ENCODE measurements at regions of chr3 and their contacts with region 1.

Region 1: GRCh38 chr3:122793568-122794416 is at the start of gene HSPBAP1:
- DNase-seq: peak; percentile 96
- H3K4me3 ChIP-seq: peak within 1 kb of the TSS; percentile 31 to 80 (median 65)
- H3K27ac ChIP-seq: peak within 1 kb of the TSS; percentile 92
- H3K4me1 ChIP-seq: peaks cover 21% of the 10 kb centered on the region
- H3K27me3 ChIP-seq: no peaks in the 10 kb centered on the region
- CTCF ChIP-seq: no peak
- POLR2A ChIP-seq: peak; percentile 68
- total RNA-seq, gene HSPBAP1: 9.2 and 10.6 TPM in 2 replicates

Region 2: DNA sequence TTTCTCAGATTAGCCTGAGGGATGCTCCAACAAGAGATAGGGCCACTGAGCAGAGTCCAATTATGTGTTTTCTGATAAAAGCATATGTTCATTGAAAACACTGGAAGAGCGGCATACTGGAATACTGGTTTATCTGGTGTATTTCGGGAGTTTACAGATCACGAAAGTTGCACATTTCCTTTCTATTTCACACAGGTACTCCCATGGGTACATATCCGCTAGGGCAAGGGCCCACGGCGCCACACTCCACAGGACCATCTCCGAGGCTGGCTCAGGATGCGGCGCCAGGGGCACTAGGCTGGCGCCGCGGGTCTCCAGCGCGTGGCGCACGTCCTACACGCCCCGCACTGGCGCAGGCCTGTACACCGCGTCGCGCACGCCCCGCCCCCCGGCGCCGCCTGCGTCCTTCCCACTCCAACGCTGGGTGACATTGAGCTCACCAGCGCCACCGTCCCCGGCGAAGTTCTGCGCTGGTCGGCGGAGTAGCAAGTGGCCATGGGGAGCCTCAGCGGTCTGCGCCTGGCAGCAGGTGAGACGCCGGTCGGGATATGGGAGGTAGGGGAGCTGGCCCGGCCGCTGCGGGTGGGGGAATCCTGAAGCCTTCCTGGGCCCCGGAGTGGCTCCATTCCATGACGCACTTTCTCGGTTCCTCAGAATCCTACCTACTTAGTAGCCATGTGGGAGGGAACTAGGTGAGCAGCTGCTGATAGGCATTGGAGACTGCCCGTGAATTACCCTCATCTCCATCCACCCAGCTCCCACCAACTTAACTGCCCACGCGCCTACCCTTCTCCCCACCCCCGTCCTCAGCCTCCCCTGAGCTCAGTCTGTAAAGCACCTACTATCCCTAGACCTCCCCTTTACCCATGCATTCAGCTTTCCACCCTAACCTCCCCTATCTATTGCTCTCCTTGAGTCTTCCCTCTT is 409.8 kb before region 1 on chr3 and contains the start of gene FAM162A:
- CTCF ChIA-PET with region 1: no interaction called
- POLR2A ChIA-PET with region 1: no interaction called
- dilution Hi-C with region 1: no loop called
- intact Hi-C with region 1: loop called (anchors 5 kb)
- DNase-seq: peak; percentile 96
- H3K4me3 ChIP-seq: peak within 1 kb of the TSS; percentile 69 to 97 (median 77)
- H3K27ac ChIP-seq: peak within 1 kb of the TSS; percentile 58
- H3K4me1 ChIP-seq: peaks cover 16% of the 10 kb centered on the region
- H3K27me3 ChIP-seq: no peaks in the 10 kb centered on the region
- CTCF ChIP-seq: peak; percentile 53 to 69
- POLR2A ChIP-seq: peak; percentile 86
- total RNA-seq, gene FAM162A: 23.4 and 25.9 TPM in 2 replicates

Region 3: GRCh38 chr3:122514123-122515019 is 279.4 kb before region 1 on chr3 and contains the start of gene KPNA1:
- CTCF ChIA-PET with region 1: no interaction called
- POLR2A ChIA-PET with region 1: no interaction called
- dilution Hi-C with region 1: no loop called
- intact Hi-C with region 1: loop called (anchors 1 kb)
- DNase-seq: peak; percentile 92
- H3K4me3 ChIP-seq: peak within 1 kb of the TSS; percentile 55 to 96 (median 91)
- H3K27ac ChIP-seq: peak within 1 kb of the TSS; percentile 72
- H3K4me1 ChIP-seq: peaks cover 14% of the 10 kb centered on the region
- H3K27me3 ChIP-seq: peaks cover 1 to 8% of the 10 kb centered on the region in 2 experiments
- CTCF ChIP-seq: no peak
- POLR2A ChIP-seq: peak; percentile 94
- total RNA-seq, gene KPNA1: 110 and 113 TPM in 2 replicates

Region 4: DNA sequence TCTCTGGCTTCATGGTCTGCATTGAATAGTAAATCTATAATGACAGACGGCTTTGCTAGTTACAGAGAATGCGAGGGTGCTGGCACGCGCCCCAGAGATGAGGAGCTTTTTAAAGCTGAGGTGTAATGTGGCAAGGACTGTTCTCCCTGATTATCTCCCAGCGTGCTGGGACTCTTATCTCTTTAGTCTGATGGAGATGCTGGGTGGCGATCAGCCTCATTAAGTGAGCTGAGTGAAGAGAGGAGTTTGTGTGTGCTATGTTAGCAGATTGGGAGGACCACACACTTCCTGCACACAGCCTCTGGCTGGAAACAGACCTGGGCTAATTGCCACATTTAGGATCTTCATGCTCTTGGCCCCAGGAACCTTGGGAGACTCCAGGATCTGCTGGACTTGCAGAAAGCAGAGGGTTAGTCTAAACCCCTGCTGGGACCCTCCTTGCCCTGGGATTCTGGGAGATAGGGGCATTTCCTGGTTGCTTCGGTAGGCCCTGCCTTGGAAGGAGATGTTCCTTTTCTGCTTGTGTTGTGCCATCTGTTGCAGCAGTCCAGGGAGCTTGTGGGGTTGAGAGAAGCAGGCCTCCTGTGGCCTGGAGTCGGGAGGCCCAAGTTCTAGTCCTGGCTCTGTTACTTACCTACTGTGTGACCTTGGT is 288.1 kb after region 1 on chr3:
- CTCF ChIA-PET with region 1: no interaction called
- POLR2A ChIA-PET with region 1: no interaction called
- dilution Hi-C with region 1: no loop called
- intact Hi-C with region 1: loop called (anchors 10 kb)
- DNase-seq: peak; percentile 38
- H3K4me3 ChIP-seq: no peak overlapping the region
- H3K27ac ChIP-seq: peak overlapping the region; percentile 60
- H3K4me1 ChIP-seq: peaks cover 73% of the 10 kb centered on the region
- H3K27me3 ChIP-seq: no peaks in the 10 kb centered on the region
- CTCF ChIP-seq: no peak
- POLR2A ChIP-seq: no peak

Region 5: DNA sequence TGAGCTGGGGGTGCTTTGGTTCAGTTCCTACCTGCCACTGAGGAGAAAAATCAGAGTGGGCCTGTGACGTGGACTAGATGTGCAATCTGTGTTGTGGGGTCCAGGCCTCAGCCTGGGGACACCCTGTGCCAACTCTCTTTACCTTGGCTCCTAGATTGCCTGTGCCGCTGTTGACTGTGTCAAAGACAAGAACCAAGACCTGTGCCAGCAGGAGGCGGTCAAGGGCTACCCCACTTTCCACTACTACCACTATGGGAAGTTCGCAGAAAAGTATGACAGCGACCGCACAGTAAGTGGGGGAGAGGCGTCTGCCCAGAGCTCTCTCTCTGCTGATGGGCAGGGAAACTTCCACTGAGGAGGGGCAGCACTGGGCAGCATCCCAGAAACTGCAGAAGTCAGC is 367.4 kb after region 1 on chr3:
- CTCF ChIA-PET with region 1: no interaction called
- POLR2A ChIA-PET with region 1: no interaction called
- dilution Hi-C with region 1: no loop called
- intact Hi-C with region 1: no loop called
- DNase-seq: no peak
- H3K4me3 ChIP-seq: no peak overlapping the region
- H3K27ac ChIP-seq: no peak overlapping the region
- H3K4me1 ChIP-seq: peaks cover 10% of the 10 kb centered on the region
- H3K27me3 ChIP-seq: no peaks in the 10 kb centered on the region
- CTCF ChIP-seq: no peak
- POLR2A ChIP-seq: no peak

Region 6: DNA sequence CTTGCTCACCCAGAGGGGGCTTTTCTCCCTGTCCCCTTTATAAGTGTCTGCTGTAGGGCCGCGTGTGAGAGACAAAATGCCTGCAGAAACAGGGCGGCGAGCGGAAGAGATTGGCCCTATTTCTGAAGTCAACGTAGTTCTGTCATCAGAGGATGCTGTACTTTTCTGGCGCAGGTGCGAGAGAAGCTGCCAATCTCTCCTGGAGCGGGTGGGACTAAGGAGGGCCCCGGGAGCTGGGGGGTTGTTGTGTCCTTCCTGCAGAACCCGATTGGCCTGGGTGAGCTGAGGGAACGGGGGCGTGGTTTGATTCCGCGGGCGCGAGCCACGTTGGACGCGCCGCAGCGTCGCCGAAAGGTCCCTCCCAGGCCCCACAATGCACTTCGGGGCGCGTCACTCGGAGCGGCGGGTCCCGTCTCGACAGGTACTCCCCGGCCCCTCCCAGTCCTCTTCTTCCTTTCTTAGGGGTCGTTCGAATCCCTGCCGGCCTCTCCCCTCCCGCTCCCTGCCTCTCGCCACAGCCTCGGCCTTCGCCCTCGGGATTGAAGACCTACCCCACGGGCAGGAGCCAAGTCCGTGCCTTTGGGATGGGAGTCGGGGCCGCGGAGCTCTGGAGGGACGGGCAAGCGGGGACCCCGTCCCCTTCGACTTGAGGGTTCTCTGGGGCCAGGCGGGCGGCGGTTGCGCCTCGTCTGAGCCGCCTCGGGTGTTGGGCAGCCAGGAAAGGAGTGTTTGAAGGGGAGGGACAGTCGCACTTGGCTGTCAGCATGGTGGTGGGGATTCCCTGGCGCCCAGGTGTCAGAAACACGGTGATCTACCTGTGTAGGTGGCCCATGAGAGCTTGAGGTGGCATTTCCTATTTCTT is 408.0 kb after region 1 on chr3 and contains the start of gene SEC22A:
- CTCF ChIA-PET with region 1: no interaction called
- POLR2A ChIA-PET with region 1: no interaction called
- dilution Hi-C with region 1: no loop called
- intact Hi-C with region 1: loop called (anchors 2 kb)
- DNase-seq: peak; percentile 95
- H3K4me3 ChIP-seq: peak within 1 kb of the TSS; percentile 67 to 93 (median 80)
- H3K27ac ChIP-seq: peak within 1 kb of the TSS; percentile 52
- H3K4me1 ChIP-seq: peaks cover 11% of the 10 kb centered on the region
- H3K27me3 ChIP-seq: no peaks in the 10 kb centered on the region
- CTCF ChIP-seq: no peak
- POLR2A ChIP-seq: peak; percentile 79
- total RNA-seq, gene SEC22A: 20.1 and 20.9 TPM in 2 replicates

Measured in endothelial cell of umbilical vein (primary cell).